Psoas muscle (tissue), 8 donors: ENCODE measurements at regions of chr2 and their contacts with region 1.

Region 1: DNA sequence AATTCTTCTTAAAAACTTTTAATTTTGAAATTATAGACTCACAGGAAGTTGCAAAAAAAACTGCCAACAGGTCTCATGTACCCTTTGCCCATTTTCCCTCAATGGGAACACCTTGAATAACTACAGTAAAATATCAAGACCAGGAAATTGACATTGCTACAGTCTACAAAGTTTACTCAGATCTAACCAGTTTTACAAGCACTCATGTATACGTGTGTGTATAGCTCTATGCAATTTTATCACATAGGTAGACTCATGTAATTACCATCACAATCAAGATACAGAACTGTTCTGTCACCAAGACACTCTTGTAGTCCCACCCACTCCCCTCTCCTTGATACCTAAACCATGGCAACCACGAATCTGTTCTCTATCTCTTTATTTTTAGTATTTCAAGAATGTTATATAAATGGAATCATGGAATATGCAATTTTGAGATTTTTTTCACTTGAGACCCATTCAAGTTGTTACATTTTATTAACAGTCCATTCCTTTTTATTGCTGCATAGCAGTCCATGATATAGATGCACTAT is 6.6 kb downstream of the HYCC2 start:
- DNase-seq: no peak
- ATAC-seq: no peak
- H3K4me3 ChIP-seq: no peak overlapping the region
- H3K27ac ChIP-seq: no peak overlapping the region
- H3K4me1 ChIP-seq: peaks cover 33% of the 10 kb centered on the region
- H3K27me3 ChIP-seq: no peaks in the 10 kb centered on the region
- CTCF ChIP-seq: no peak

Region 2: DNA sequence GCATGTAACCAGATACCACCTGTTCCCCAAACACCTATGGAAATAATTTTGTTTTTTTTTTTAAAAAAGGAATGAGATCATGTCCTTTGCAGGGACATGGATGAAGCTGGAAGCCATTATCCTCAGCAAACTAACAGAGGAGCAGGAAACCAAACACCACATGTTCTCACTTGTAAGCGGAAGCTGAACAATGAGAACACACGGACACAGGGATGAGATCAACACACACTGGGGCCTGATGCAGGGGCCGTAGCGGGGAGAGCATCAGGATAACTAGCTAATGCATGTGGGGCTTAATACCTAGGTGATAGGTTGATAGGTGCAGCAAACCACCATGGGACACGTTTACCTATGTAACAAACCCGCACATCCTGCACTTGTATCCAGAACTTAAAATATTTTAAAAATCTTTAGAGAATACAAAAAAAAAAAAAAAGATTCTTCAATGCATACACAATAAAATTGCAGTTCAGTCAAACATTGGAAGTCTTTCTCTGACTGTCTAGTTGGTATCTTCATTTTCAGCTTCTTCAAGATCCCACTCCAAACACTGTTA is 106.5 kb after region 1 on chr2:
- intact Hi-C with region 1: loop called in 1 of 2 experiments (anchors 5 kb)
- DNase-seq: no peak
- ATAC-seq: peak; percentile 11 to 30 (median 20)
- H3K4me3 ChIP-seq: no peak overlapping the region
- H3K27ac ChIP-seq: no peak overlapping the region
- H3K4me1 ChIP-seq: no peaks in the 10 kb centered on the region
- H3K27me3 ChIP-seq: no peaks in the 10 kb centered on the region
- CTCF ChIP-seq: no peak